MCF 10A (cell line): ENCODE measurements at regions of chr11 and their contacts with region 1.

Region 1: DNA sequence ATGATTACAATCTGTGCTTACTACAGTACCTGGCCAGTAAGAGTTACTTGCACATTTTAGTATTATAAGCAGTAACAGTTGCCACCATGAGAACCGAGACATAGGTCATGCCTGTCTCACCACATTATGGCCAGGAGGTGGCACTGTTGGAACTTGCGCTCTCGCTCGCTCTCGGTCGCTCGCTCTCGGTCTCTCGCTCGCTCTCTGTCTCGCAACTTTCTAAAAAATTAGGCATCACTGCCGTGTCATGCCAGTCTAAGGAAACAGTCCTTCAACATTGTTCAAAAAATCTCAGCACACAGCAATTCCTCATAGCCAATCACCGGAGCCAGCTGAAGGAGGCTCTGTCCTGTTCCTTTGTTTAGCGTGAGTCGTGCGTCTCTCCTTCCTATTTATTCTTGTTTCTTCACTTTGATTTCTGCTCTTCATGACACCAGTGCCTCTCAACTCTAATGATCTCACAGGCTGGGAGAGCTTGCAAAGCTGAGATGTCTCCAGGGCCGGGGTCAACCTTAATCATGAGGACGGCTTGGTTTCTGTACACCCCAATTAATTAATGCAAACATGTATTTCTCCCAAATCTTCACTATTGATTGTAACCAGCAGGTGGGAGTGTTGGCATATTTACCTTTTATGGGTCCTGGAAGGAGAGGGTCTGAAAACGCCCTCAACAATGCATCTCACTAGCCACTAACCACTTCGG is 6.3 kb upstream of the ADAMTS8 start:
- DNase-seq: peak; percentile 84
- H3K4me3 Mint-ChIP-seq: no peak overlapping the region
- H3K27ac Mint-ChIP-seq: no peak overlapping the region
- H3K4me1 Mint-ChIP-seq: peaks cover 12% of the 10 kb centered on the region
- H3K27me3 Mint-ChIP-seq: peaks cover 20% of the 10 kb centered on the region
- CTCF ChIP-seq: peak; percentile 88

Region 2: DNA sequence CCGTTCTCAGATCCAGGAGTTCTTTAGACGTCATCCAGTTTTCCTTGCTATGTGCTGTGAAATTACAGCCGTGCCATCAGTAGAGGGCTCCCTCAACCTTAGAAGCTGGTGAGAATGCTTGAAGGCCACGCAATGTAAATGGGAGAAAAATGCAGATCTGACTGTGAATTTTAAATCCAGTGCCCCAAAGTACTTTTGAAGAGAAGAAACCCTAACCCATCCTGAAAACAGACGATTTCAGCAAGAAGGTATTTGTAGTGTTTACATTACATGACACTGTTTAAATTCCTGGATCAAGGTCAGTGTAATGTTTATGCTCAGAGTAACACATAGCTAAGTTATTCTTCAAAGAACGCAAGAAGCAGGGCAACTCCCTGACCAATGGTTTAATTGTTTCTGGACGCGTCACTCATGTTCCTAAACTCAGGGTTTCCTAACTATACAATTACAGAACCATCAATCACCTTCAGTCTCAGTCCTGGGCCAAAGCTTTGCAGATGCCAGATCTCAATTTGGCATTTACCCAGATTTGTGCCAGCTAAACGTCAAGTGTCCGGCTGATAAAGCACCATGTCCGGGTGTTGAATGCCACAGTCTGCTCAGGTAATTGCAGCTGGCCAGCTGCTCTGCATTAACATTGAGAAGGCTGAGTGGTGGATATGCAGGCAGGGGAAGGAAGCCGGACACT is 44.5 kb before region 1 on chr11:
- CTCF ChIA-PET with region 1: interaction called, 10 read pairs
- POLR2A ChIA-PET with region 1: no interaction called
- intact Hi-C with region 1: loop called (anchors 1 kb)
- DNase-seq: peak; percentile 63
- H3K4me3 Mint-ChIP-seq: no peak overlapping the region
- H3K27ac Mint-ChIP-seq: no peak overlapping the region
- H3K4me1 Mint-ChIP-seq: peaks cover 15% of the 10 kb centered on the region
- H3K27me3 Mint-ChIP-seq: peaks cover 36% of the 10 kb centered on the region
- CTCF ChIP-seq: peak; percentile 47

Region 3: DNA sequence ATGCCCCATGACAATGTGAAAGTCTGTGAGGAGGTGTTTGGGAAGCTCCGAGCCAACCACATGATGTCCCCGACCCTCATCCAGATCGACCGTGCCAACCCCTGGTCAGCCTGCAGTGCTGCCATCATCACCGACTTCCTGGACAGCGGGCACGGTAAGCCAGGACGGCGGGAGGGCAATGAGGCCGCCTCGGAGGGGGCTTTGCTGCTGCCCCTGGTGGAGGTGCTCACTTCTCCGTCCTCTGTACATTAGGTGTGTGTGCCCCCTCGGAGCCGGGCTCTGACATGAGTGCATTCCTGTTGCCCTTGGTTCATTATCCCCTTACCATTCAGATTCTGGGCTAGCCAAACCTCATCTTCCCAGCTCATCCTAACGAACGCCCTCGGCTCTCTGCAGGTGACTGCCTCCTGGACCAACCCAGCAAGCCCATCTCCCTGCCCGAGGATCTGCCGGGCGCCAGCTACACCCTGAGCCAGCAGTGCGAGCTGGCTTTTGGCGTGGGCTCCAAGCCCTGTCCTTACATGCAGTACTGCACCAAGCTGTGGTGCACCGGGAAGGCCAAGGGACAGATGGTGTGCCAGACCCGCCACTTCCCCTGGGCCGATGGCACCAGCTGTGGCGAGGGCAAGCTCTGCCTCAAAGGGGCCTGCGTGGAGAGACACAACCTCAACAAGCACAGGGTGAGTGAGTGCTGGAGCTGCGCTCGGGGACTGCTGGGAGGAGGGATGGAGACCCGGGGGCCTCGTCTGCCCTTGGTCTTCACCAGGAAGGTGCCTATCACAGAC is 27.6 kb after region 1 on chr11:
- CTCF ChIA-PET with region 1: interaction called, 11 read pairs
- POLR2A ChIA-PET with region 1: no interaction called
- intact Hi-C with region 1: no loop called
- DNase-seq: no peak
- H3K4me3 Mint-ChIP-seq: no peak overlapping the region
- H3K27ac Mint-ChIP-seq: no peak overlapping the region
- H3K4me1 Mint-ChIP-seq: no peaks in the 10 kb centered on the region
- H3K27me3 Mint-ChIP-seq: no peaks in the 10 kb centered on the region
- CTCF ChIP-seq: no peak

Region 4: DNA sequence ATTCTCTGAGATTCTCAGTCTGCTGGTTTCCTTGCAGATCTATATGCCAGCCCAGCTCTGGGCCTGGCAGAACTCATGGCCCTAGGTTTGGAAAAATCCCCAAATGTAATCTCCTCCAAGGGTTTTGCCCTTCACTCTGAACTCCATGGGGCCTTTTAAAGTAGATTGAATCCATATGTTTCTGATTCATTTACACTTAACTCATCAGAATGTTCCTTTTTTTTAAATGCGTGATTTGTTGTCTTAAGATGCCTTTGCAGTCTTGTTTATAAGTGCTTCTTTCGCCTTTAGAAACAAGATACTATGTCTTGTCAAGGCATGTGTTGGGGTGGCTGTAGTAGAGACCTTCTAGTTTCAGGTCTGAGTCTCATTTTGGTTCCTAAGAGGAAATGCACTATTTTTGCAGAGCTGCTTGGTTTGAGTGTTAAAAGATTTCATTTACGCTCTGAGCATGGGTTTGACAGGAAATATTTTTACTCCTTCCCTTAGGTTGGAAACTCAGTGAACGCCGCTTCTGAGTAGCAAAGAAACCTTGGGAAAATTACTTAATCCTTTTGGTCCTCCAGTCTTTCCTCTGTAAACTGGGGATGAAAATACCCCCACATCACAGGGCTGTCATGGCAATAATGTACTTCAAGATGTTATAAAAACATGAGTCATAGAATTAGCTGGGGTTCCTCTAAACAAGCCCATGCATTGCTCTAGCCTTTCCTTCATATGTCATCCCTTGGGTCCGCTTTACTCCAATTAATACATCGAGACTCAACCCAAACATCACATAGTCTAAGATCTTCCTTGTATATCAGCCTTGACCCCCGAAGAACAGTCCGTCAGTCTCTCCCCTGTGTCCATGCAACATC is 398.1 kb after region 1 on chr11:
- CTCF ChIA-PET with region 1: interaction called, 250 read pairs
- POLR2A ChIA-PET with region 1: no interaction called
- intact Hi-C with region 1: loop called (anchors 1 kb)
- DNase-seq: no peak
- H3K4me3 Mint-ChIP-seq: no peak overlapping the region
- H3K27ac Mint-ChIP-seq: no peak overlapping the region
- H3K4me1 Mint-ChIP-seq: no peaks in the 10 kb centered on the region
- H3K27me3 Mint-ChIP-seq: no peaks in the 10 kb centered on the region
- CTCF ChIP-seq: no peak

Region 5: DNA sequence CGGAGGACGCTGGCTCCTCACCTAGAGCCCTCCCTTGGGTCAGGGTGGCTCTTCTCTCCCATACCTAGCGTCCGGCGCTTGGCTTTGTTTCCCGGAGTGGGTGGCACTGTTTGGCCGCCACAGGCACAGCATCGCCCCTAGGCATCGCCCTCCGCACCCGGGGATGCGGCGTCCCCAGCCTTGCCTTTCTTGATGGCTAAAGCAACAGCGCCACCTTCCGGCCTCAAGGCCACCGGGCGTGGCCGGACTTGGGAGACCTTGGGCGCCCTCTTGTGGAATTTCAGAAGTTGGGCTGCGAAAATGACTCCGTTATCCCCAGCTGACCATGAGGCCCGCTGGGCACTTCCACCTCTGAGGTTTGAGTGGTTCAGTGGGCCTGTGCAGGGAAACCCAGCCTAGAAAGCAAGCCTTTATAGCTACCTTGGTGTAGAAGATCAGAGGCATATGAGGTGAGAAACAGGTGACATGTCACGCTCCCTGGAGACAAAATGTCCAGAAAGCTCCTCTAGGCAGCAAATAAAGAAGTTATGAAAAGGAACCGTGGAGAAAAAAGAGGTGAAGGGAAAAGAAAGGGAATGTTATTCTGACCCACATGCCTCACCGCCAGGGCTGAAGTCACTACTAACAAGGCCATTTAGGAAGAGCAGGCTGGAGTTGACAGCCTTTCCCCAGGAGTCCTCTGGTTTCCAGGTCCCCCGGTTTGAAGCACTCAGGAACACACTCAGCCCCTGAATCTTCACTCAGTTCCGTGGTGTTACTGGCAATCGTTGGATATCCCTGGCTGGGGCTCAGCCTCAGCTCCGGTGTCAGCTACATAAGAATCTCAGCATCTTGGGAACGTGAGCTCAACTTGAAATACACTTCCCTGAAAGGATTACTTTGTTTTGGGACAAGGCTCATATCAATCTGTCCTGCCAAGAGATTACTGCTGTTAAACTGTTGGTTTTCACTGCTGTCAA is 427.5 kb after region 1 on chr11:
- CTCF ChIA-PET with region 1: interaction called, 1,064 read pairs
- POLR2A ChIA-PET with region 1: interaction called, 8 read pairs
- intact Hi-C with region 1: loop called (anchors 1 kb)
- DNase-seq: peak; percentile 88
- H3K4me3 Mint-ChIP-seq: no peak overlapping the region
- H3K27ac Mint-ChIP-seq: no peak overlapping the region
- H3K4me1 Mint-ChIP-seq: no peaks in the 10 kb centered on the region
- H3K27me3 Mint-ChIP-seq: no peaks in the 10 kb centered on the region
- CTCF ChIP-seq: peak; percentile 100